ENCODE measurements at regions of chr6 and their contacts with region 1.

Region 1: DNA sequence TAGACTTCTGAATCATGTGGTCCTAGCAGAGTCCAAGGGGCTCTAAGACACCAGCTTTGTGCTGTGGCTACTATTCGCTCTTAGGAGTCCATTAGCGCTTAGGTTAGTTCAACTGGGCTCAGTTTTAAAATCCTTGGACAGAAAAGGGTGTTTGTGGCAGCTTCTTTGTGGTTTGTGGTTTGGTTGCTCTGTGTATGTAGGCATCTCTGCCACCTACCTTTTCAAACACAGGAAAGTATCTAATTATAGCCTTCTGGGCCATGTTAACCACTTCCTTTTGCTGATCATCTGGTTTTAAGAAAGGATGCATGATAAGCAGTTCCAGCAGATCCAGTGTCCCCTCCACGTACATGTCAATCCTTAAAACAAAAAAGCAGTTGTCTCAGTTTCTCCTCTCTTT is 10.8 kb downstream of the GSTA4 start:
- DNase-seq: no peak
- H3K4me3 ChIP-seq: no peak overlapping the region
- H3K27ac ChIP-seq: no peak overlapping the region
- H3K4me1 ChIP-seq: no peaks in the 10 kb centered on the region
- H3K27me3 ChIP-seq: no peaks in the 10 kb centered on the region
- CTCF ChIP-seq: no peak
- POLR2A ChIP-seq: no peak

Region 2: DNA sequence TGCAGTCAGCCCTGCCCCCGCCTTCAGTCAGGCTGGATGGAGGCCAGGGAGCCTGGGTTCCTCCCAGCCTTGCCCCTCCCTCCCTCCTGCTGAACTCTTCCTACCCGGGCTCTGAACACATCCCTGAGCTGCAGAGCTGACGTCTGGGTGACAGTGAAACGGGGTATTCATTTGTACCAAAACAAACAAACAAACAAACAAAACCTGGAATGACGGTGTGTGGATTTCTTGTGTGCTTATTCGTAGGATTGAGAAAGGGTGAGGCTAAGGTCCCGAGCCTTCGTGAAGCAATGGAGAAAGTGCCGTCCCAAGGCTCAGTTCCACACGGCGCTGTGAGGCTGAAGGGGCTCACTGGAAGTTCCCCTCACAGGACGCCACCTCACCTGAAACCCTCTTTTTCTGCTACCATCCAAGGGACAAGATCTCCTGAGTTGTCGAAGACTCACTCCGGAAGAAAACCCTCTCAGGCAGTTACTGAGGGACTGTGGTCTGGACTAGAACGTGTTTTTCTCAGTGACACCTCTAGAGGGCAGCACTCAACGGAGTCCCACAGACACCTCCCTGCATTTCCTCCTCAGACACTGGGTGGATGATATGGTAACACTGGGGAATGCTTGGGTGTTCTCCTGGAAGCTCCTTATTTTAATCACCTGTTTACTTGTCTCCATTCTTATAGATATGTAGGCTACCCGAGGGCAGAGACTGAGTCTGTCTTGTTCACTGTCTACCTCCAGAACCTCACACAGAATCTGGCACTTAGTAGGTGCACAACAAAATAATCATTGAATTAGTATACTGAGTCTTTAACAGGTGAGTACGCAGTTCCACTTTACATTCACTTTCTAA is 102.0 kb before region 1 on chr6:
- intact Hi-C with region 1: loop called (anchors 10 kb)
- DNase-seq: peak; percentile 3
- H3K4me3 ChIP-seq: peak overlapping the region; percentile 30 to 76 (median 54)
- H3K27ac ChIP-seq: peak overlapping the region; percentile 80 to 88 (median 83)
- H3K4me1 ChIP-seq: peaks cover 0 to 8% (median 3%) of the 10 kb centered on the region in 3 donors
- H3K27me3 ChIP-seq: no peaks in the 10 kb centered on the region
- CTCF ChIP-seq: peak; percentile 63 to 84 (median 75)
- POLR2A ChIP-seq: no peak

Measured in esophagus squamous epithelium (tissue), 5 donors.